AG04450 (cell line): ENCODE measurements at regions of chr1 and their contacts with region 1.

Region 1: DNA sequence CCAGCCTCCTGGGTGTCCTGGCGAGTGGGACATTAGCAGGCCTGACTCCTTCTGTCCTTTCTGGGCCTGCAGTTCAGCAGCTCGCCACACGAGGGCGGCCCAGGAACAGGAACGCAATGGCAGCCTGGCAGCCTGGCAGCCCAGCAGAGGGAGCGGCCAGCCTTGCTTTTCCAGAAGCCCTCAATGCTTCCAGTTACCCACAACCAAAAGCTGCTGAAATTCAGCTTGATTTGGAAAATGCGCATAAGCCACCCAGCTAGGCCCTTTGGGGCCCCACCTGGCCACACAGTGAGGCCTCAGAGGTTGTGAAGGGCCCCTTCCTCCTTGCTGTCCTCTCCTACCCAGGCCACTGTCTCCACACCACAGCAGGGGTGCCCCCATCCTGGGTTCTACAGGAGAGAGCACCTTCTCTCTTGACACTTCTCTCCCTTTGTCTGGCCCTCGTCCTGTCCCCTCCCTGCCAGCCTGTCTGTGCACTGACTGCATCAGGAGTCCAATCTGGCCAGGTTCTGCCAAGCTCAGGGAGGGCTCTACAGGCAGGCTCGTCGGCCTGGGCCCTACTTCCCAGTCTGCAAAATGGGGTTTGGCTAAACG is 103.4 kb upstream of the VAMP3 start:
- DNase-seq: peak; percentile 65
- H3K4me3 ChIP-seq: no peak overlapping the region
- H3K27ac ChIP-seq: peak overlapping the region; percentile 31
- H3K27me3 ChIP-seq: peaks cover 2% of the 10 kb centered on the region
- CTCF ChIP-seq: peak; percentile 100

Region 2: DNA sequence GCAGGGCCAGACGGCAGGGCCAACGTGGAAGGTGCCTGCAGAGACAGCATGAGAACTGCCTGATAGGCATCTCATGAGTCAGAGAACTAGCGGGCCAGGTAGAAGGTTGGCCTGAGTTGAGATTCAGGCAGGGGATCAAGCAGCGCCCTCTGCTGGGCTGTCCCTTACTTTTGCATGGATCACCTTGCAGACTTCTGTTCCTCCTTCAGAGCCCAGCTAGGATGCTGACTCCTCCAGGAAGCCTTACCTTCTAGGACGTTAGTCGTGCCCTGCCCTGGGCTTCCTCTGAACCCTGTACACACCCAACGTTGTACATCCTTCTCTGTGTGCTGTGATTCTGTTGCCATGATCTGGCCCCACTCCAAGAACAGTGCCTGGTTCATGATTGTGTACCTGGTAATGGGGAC is 128.0 kb before region 1 on chr1:
- CTCF ChIA-PET with region 1: no interaction called
- POLR2A ChIA-PET with region 1: no interaction called
- DNase-seq: no peak
- H3K4me3 ChIP-seq: no peak overlapping the region
- H3K27ac ChIP-seq: no peak overlapping the region
- H3K27me3 ChIP-seq: no peaks in the 10 kb centered on the region
- CTCF ChIP-seq: no peak; the same call in 1 of the 2 replicates

Region 3: DNA sequence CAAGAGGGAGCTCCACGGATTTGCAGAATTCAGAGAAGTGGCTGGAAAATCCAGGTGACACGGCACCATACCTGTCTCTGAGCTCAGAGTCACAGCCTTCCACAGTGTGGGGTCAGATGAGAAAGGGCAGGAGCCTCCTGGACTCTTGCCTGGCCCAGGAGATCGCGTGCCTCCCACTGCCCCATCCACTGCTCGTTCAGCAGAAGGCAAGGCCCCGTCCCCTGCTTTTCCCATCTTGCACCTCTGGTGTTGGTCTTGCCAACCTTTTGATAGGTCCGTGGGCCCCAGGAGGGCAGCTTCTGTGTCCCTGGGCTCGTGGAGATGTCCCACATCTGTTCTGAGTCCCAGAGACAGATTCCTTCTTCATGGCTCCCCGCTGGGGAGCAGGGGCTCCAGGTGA is 19.7 kb after region 1 on chr1:
- CTCF ChIA-PET with region 1: interaction called, 12 read pairs
- POLR2A ChIA-PET with region 1: no interaction called
- DNase-seq: no peak
- H3K4me3 ChIP-seq: no peak overlapping the region
- H3K27ac ChIP-seq: no peak overlapping the region
- H3K27me3 ChIP-seq: peaks cover 20% of the 10 kb centered on the region
- CTCF ChIP-seq: no peak

Region 4: GRCh38 chr1:7710859-7711258 is 43.1 kb after region 1 on chr1:
- CTCF ChIA-PET with region 1: interaction called, 11 read pairs
- POLR2A ChIA-PET with region 1: no interaction called
- DNase-seq: no peak
- H3K4me3 ChIP-seq: no peak overlapping the region
- H3K27ac ChIP-seq: no peak overlapping the region
- H3K27me3 ChIP-seq: peaks cover 22% of the 10 kb centered on the region
- CTCF ChIP-seq: no peak

Region 5: DNA sequence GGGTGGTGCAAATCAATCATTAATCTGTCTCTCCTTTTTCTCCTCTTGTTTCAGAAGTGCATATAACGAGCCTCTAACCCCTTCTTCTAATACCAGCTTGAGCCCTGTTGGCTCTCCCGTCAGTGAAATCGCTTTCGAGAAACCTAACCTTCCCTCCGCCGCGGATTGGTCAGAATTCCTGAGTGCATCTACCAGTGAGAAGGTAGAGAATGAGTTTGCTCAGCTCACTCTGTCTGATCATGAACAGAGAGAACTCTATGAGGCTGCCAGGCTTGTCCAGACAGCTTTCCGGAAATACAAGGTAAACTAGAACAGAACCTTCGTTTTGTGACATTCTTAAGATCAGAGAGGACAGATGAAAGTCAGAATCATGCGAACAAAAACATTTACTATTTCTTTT is 78.1 kb after region 1 on chr1:
- CTCF ChIA-PET with region 1: interaction called, 677 read pairs
- POLR2A ChIA-PET with region 1: no interaction called
- DNase-seq: no peak
- H3K4me3 ChIP-seq: no peak overlapping the region
- H3K27ac ChIP-seq: no peak overlapping the region
- H3K27me3 ChIP-seq: peaks cover 9% of the 10 kb centered on the region
- CTCF ChIP-seq: no peak

Region 6: GRCh38 chr1:7760245-7760644 is 92.5 kb after region 1 on chr1:
- CTCF ChIA-PET with region 1: interaction called, 677 read pairs
- POLR2A ChIA-PET with region 1: no interaction called
- DNase-seq: no peak
- H3K4me3 ChIP-seq: no peak overlapping the region
- H3K27ac ChIP-seq: no peak overlapping the region
- H3K27me3 ChIP-seq: peaks cover 5% of the 10 kb centered on the region
- CTCF ChIP-seq: no peak

Region 7: GRCh38 chr1:7902478-7903085 is 234.9 kb after region 1 on chr1:
- CTCF ChIA-PET with region 1: interaction called, 34 read pairs
- POLR2A ChIA-PET with region 1: no interaction called
- DNase-seq: peak; percentile 46
- H3K4me3 ChIP-seq: no peak overlapping the region
- H3K27ac ChIP-seq: no peak overlapping the region
- H3K27me3 ChIP-seq: no peaks in the 10 kb centered on the region
- CTCF ChIP-seq: peak; percentile 79

Region 8: GRCh38 chr1:7975212-7975865 is 307.6 kb after region 1 on chr1:
- CTCF ChIA-PET with region 1: interaction called, 13 read pairs
- POLR2A ChIA-PET with region 1: no interaction called
- DNase-seq: peak; percentile 48
- H3K4me3 ChIP-seq: no peak overlapping the region
- H3K27ac ChIP-seq: no peak overlapping the region
- H3K27me3 ChIP-seq: no peaks in the 10 kb centered on the region
- CTCF ChIP-seq: peak; percentile 90